ENCODE measurements at regions of chr11 and their contacts with region 1.

Region 1: GRCh38 chr11:8911029-8911826 is at the start of gene AKIP1:
- DNase-seq: peak; percentile 93
- H3K4me3 ChIP-seq: peak within 1 kb of the TSS; percentile 55 to 69
- H3K27ac ChIP-seq: peak within 1 kb of the TSS; percentile 74 to 84
- H3K4me1 ChIP-seq: no peaks in the 10 kb centered on the region
- H3K27me3 ChIP-seq: no peaks in the 10 kb centered on the region
- CTCF ChIP-seq: peak in 2 of 4 experiments; percentile 14 to 16
- POLR2A ChIP-seq: peak; percentile 60
- total RNA-seq, gene AKIP1: 23.8 to 47.1 TPM

Region 2: DNA sequence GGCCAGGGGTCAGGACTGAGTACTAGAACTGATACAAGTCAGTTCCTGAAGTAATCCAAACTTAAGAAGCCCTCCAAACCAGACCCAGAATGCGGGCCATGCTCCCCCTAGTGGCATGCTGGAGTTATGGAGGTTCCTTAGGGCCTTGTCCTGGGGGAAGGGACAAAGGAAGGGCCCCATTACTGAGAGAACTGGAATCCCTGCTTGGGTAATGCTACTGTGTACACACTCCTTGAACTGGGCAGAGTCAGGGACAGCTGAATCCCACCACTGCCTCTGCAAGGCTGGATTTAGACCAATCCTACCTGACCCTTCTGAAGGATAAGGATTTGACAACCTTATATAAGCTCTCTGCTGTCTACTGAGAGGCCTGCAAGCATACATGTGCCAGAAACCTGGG is 97.6 kb before region 1 on chr11:
- intact Hi-C with region 1: loop called (anchors 2 kb)
- DNase-seq: peak; percentile 35
- H3K4me3 ChIP-seq: no peak overlapping the region
- H3K27ac ChIP-seq: peak overlapping the region; percentile 5 to 29
- H3K4me1 ChIP-seq: no peaks in the 10 kb centered on the region
- H3K27me3 ChIP-seq: no peaks in the 10 kb centered on the region
- CTCF ChIP-seq: peak; percentile 62 to 78 (median 70)
- POLR2A ChIP-seq: no peak

Region 3: DNA sequence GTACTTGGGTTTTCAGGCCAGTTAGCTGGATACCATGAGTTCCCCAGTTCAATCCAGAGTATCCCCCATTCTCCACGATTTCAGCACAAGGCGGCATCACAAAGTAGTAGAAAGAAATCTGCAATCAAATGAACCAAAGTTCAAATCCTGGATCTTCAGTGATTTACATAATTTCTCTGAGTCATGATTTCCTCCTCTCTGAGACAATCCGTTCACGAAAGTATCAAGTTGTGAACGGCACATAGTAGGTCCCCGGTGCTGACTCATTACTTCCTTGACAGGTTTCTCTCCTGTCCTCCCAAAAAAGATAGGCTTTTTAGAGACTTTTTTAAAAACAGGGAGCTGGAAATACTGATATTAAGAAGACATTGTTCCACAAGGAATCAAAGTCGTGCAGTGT is 69.3 kb before region 1 on chr11:
- intact Hi-C with region 1: no loop called
- DNase-seq: no peak
- H3K4me3 ChIP-seq: no peak overlapping the region
- H3K27ac ChIP-seq: no peak overlapping the region
- H3K4me1 ChIP-seq: no peaks in the 10 kb centered on the region
- H3K27me3 ChIP-seq: no peaks in the 10 kb centered on the region
- CTCF ChIP-seq: no peak
- POLR2A ChIP-seq: no peak

Region 4: DNA sequence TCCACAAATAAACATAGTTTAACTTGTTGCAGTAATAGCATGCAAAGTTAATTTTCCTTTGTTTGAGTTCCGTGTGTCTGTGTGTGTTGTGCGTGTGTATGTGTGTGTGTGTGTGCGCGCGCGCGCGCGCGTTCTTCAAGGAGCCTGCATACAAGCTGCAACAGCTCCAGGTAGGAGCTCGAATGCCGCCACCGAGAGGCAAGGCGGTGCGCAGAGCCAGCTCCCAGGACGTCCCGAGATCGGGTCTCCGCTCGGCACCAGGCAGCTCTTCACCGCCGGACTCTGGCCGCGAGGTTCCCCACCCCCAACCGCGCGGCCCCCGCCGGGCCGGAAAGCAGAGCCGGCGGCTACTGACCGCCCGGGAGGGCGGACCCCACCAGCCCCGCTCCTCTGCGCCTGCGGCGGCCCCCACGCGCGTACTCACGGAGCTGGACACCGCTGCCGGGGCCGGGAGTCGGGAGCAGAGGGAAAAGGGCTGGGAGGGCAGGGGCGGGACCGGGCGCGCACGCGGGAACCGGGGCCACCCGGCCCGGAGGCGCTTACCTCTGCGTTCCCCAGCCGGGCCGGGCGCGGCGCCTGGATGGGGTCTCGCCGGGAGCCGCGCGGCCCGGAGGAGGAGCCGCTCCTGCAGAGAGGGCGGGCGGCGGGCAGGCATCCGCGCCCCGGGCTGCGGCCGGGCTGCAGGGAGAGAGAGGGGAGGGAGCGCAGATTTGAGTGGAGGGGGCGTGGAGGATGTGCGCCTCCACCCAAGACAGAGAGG is 40.6 kb before region 1 on chr11:
- intact Hi-C with region 1: loop called (anchors 5 kb)
- DNase-seq: peak; percentile 68
- H3K4me3 ChIP-seq: peak overlapping the region; percentile 70 to 81
- H3K27ac ChIP-seq: peak overlapping the region; percentile 82 to 87
- H3K4me1 ChIP-seq: no peaks in the 10 kb centered on the region
- H3K27me3 ChIP-seq: no peaks in the 10 kb centered on the region
- CTCF ChIP-seq: no peak
- POLR2A ChIP-seq: no peak

Region 5: GRCh38 chr11:8934749-8935478 is 23.7 kb after region 1 on chr11:
- intact Hi-C with region 1: no loop called
- DNase-seq: no peak
- H3K4me3 ChIP-seq: no peak overlapping the region
- H3K27ac ChIP-seq: no peak overlapping the region
- H3K4me1 ChIP-seq: no peaks in the 10 kb centered on the region
- H3K27me3 ChIP-seq: no peaks in the 10 kb centered on the region
- CTCF ChIP-seq: no peak
- POLR2A ChIP-seq: no peak

Region 6: GRCh38 chr11:9137293-9138132 is 226.3 kb after region 1 on chr11:
- intact Hi-C with region 1: loop called (anchors 2 kb)
- DNase-seq: peak; percentile 75
- H3K4me3 ChIP-seq: no peak overlapping the region
- H3K27ac ChIP-seq: peak overlapping the region; percentile 41 to 65
- H3K4me1 ChIP-seq: peaks cover 32% of the 10 kb centered on the region
- H3K27me3 ChIP-seq: no peaks in the 10 kb centered on the region
- CTCF ChIP-seq: peak; percentile 84 to 96 (median 90)
- POLR2A ChIP-seq: no peak

Measured in prostate gland (tissue), 2 donors.